ENCODE measurements at regions of chr3 and their contacts with region 1.

Region 1: GRCh38 chr3:8301728-8302462 is 199.7 kb upstream of the LMCD1 start:
- DNase-seq: peak; percentile 63
- H3K4me3 Mint-ChIP-seq: no peak overlapping the region
- H3K27ac Mint-ChIP-seq: no peak overlapping the region
- H3K4me1 Mint-ChIP-seq: no peaks in the 10 kb centered on the region
- H3K27me3 Mint-ChIP-seq: no peaks in the 10 kb centered on the region
- CTCF ChIP-seq: peak; percentile 75

Region 2: GRCh38 chr3:7285505-7285904 is 1016.4 kb before region 1 on chr3:
- CTCF ChIA-PET with region 1: interaction called, 3 read pairs
- POLR2A ChIA-PET with region 1: no interaction called
- intact Hi-C with region 1: loop called (anchors 1 kb)
- DNase-seq: peak; percentile 51
- H3K4me3 Mint-ChIP-seq: no peak overlapping the region
- H3K27ac Mint-ChIP-seq: no peak overlapping the region
- H3K4me1 Mint-ChIP-seq: peaks cover 2% of the 10 kb centered on the region
- H3K27me3 Mint-ChIP-seq: no peaks in the 10 kb centered on the region
- CTCF ChIP-seq: peak; percentile 48

Region 3: GRCh38 chr3:8052659-8053058 is 249.2 kb before region 1 on chr3:
- CTCF ChIA-PET with region 1: no interaction called
- POLR2A ChIA-PET with region 1: no interaction called
- intact Hi-C with region 1: no loop called
- DNase-seq: no peak
- H3K4me3 Mint-ChIP-seq: no peak overlapping the region
- H3K27ac Mint-ChIP-seq: no peak overlapping the region
- H3K4me1 Mint-ChIP-seq: peaks cover 22% of the 10 kb centered on the region
- H3K27me3 Mint-ChIP-seq: no peaks in the 10 kb centered on the region
- CTCF ChIP-seq: no peak

Region 4: GRCh38 chr3:8128686-8129085 is 173.2 kb before region 1 on chr3:
- CTCF ChIA-PET with region 1: no interaction called
- POLR2A ChIA-PET with region 1: no interaction called
- intact Hi-C with region 1: loop called (anchors 5 kb)
- DNase-seq: no peak
- H3K4me3 Mint-ChIP-seq: no peak overlapping the region
- H3K27ac Mint-ChIP-seq: no peak overlapping the region
- H3K4me1 Mint-ChIP-seq: no peaks in the 10 kb centered on the region
- H3K27me3 Mint-ChIP-seq: no peaks in the 10 kb centered on the region
- CTCF ChIP-seq: no peak

Region 5: DNA sequence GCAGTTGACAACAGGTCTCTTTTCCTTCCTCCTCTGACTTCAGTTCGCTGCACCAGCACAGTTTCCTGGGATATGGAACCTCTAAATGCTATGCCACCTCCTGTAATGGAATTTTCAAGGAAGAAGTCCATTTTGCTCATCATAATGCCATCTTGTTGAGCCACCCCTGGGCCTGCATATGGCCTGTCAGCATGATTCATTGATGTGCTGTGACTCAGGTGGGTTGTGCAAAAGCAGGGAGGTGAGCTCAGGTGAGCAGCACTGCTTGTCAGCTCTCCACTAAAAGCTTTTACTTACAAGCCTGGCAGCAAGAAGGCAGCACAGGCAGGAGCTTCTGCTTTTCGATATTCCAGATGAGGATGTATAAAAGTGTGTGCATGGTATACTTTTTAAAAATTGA is 47.4 kb before region 1 on chr3:
- CTCF ChIA-PET with region 1: interaction called, 16 read pairs
- POLR2A ChIA-PET with region 1: no interaction called
- intact Hi-C with region 1: no loop called
- DNase-seq: peak; percentile 51
- H3K4me3 Mint-ChIP-seq: no peak overlapping the region
- H3K27ac Mint-ChIP-seq: no peak overlapping the region
- H3K4me1 Mint-ChIP-seq: no peaks in the 10 kb centered on the region
- H3K27me3 Mint-ChIP-seq: no peaks in the 10 kb centered on the region
- CTCF ChIP-seq: no peak

Region 6: GRCh38 chr3:8290611-8291010 is 11.3 kb before region 1 on chr3:
- CTCF ChIA-PET with region 1: interaction called, 27 read pairs
- POLR2A ChIA-PET with region 1: no interaction called
- intact Hi-C with region 1: no loop called
- DNase-seq: no peak
- H3K4me3 Mint-ChIP-seq: no peak overlapping the region
- H3K27ac Mint-ChIP-seq: no peak overlapping the region
- H3K4me1 Mint-ChIP-seq: no peaks in the 10 kb centered on the region
- H3K27me3 Mint-ChIP-seq: peaks cover 16% of the 10 kb centered on the region
- CTCF ChIP-seq: no peak

Region 7: DNA sequence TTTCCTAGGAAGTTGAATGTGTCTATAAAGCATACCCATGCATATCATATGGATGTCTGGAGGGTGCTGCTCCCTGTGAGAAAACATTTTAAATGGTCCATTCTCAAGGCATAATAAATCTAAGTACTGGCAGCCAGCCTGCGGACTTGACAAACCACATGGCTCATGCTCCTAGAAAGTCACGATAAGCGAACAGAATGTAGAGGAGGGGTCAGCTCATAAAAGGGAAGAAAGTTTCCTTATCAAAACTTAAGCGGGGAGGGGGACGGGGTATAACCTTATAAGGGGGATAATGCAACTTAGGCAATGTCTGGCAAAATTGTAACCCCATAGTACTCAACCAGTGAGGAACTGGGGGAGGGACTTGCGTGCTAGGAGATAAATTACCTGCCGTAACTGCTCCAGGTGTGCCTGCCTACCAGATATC is 39.9 kb after region 1 on chr3:
- CTCF ChIA-PET with region 1: no interaction called
- POLR2A ChIA-PET with region 1: no interaction called
- intact Hi-C with region 1: no loop called
- DNase-seq: no peak
- H3K4me3 Mint-ChIP-seq: no peak overlapping the region
- H3K27ac Mint-ChIP-seq: no peak overlapping the region
- H3K4me1 Mint-ChIP-seq: no peaks in the 10 kb centered on the region
- H3K27me3 Mint-ChIP-seq: no peaks in the 10 kb centered on the region
- CTCF ChIP-seq: no peak

Measured in MCF 10A (cell line).